ENCODE measurements at regions of chr19 and their contacts with region 1.

Region 1: GRCh38 chr19:40348125-40348913 is at the starts of genes C19orf47 and PLD3:
- DNase-seq: peak; percentile 100
- ATAC-seq: peak; percentile 95 to 97
- H3K4me3 ChIP-seq: peak within 1 kb of the TSS; percentile 61 to 87 (median 82)
- H3K27ac ChIP-seq: peak within 1 kb of the TSS; percentile 86 to 93 (median 92)
- H3K4me1 ChIP-seq: peaks cover 9 to 22% of the 10 kb centered on the region in 2 donors
- H3K27me3 ChIP-seq: no peaks in the 10 kb centered on the region
- CTCF ChIP-seq: peak in 2 of 5 experiments; percentile 72 to 78
- POLR2A ChIP-seq: peak; percentile 87 to 95
- total RNA-seq, gene C19orf47: 178 to 287 (median 219) TPM
- total RNA-seq, gene PLD3: 136 to 198 (median 190) TPM

Region 2: GRCh38 chr19:40285353-40286234 is 62.7 kb before region 1 on chr19:
- in situ Hi-C with region 1: no loop called
- intact Hi-C with region 1: loop called (anchors 5 kb)
- DNase-seq: peak; percentile 99 to 100
- ATAC-seq: peak; percentile 88 to 90
- H3K4me3 ChIP-seq: peak overlapping the region; percentile 69 to 94 (median 77)
- H3K27ac ChIP-seq: peak overlapping the region; percentile 89 to 99 (median 95)
- H3K4me1 ChIP-seq: peaks cover 44 to 48% of the 10 kb centered on the region in 2 donors
- H3K27me3 ChIP-seq: no peaks in the 10 kb centered on the region
- CTCF ChIP-seq: no peak
- POLR2A ChIP-seq: peak in 1 of 2 donors; percentile 48

Region 3: DNA sequence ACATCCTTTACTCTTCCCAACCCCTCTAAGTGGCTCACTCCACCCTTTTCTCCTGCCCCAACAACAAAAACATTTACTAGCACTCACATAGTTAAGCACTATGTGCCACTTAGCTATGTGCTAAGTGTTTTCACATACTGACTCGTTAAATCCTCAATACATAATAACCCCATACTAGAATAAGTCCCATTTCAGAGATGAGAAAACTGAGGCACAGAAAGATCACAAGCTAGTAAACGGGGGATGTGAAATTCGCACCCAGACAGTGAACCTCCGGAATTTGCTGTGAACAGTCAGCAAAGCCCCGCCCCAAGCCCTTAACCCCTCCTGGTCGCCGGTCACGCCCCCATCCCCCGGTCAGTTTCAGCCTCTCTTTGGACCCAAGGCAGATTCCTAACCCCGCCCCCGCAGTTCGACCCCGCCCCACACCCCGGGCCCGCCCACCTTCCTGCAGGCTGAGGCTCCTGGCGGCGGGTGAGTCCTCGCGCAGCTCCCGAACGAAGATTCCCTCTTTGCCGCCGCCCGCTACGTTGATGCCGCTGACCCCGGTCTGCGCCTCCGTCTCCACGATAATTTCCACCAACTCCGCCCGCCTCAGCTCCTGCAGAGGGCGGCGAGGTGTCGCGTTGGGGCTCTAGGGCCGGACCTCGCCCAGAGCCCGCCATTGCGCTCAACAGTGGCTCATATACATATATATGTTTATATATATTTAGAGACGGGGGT is 55.1 kb after region 1 on chr19:
- in situ Hi-C with region 1: no loop called
- intact Hi-C with region 1: loop called (anchors 2 kb)
- DNase-seq: peak; percentile 70 to 77
- ATAC-seq: peak; percentile 57 to 76
- H3K4me3 ChIP-seq: peak overlapping the region; percentile 69 to 82 (median 71)
- H3K27ac ChIP-seq: peak overlapping the region; percentile 87 to 92 (median 88)
- H3K4me1 ChIP-seq: peaks cover 8 to 11% of the 10 kb centered on the region in 2 donors
- H3K27me3 ChIP-seq: no peaks in the 10 kb centered on the region
- CTCF ChIP-seq: peak in 1 of 5 experiments; percentile 33
- POLR2A ChIP-seq: no peak

Region 4: DNA sequence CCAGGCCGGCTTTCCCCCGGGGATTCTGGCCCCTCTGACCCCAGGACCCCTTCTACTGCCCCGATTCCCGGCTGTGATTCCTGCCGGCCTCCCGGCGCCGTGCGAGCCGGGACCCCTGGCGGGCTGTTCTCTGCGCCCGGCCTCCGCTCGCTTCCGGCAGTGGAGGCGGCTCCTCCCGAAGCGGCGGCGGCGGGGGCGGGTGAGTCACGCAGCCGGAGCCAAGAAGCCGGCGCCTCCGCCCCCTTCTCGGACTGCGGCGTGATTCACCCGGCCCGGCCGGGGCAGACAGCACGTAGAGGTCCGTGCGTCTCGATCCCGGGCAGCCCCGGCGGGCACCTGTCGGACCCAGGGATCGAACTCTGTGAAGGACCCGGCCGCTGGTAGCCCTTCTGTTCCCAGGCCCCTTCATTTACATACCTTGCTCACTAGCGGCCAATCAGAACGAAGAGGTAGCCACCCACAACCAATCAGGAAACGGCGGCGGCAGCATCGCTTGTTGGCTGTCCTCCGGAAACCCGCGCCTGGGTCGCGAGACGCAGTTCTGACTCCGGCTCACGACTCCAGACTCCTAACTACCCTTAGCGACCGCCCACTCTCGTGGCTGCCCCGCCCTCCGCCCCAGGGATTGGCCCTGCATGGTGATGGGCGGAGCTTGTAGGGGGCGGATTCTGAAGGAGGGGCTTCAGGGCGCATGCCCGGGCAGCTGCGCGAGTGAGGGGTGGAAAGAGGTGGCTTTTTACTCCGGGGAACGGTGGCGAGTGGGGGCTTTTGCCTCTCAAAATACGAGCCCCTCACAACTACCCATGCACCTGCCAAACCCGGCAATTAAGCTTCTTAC is 77.3 kb after region 1 on chr19 and contains the start of gene SERTAD1:
- in situ Hi-C with region 1: no loop called
- intact Hi-C with region 1: loop called (anchors 5 kb)
- DNase-seq: peak; percentile 99 to 100
- ATAC-seq: peak; percentile 82 to 87
- H3K4me3 ChIP-seq: peak within 1 kb of the TSS; percentile 78 to 94 (median 84)
- H3K27ac ChIP-seq: peak within 1 kb of the TSS; percentile 98 to 100 (median 99)
- H3K4me1 ChIP-seq: peaks cover 32 to 34% of the 10 kb centered on the region in 2 donors
- H3K27me3 ChIP-seq: no peaks in the 10 kb centered on the region
- CTCF ChIP-seq: peak in 4 of 5 experiments; percentile 66 to 97 (median 90)
- POLR2A ChIP-seq: peak; percentile 100
- total RNA-seq, gene SERTAD1: 15.3 to 18.3 (median 16.0) TPM

Region 5: DNA sequence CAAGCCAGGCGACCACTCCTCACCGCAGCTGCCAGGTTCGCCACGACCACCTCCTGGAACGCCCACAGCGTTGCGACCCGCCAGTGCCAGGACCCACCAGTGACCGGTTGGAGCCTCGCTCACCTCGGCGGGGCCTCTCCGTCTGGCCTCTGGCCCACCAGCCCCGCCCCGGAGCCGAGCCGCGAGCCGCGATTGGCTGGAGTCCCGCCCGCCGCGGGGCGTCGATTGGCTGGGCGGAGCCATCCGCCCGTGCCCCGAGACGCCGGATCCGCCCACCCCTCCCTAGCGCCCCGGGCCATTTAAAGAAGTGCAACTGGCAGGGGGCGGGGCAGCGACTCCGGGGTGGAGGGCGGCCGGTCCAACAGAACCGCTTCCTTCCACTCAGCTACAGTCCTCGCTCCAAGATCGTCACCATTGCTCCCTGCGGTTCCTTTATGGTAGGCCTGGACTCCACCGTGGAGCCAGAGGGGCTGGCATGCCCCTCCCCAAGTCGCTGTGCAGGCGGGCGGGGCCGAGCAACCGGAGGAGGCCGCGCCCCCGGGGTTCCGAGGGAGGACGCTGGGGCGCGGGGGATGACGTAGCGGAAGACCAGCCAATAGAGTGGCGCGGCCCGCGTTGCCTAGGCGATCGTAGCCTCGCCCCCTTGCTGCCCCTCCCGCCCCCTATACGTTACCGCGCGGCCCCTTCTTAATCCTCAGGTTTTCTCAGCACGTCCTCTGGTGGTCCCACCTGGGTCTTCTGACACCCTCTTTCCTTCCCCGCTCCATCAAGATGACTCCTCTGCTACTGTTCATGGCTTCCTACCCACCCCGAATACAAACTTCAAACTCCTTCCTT is 96.1 kb after region 1 on chr19 and contains the start of gene SERTAD3:
- in situ Hi-C with region 1: no loop called
- intact Hi-C with region 1: loop called (anchors 2 kb)
- DNase-seq: peak; percentile 95 to 97
- ATAC-seq: peak; percentile 72 to 73
- H3K4me3 ChIP-seq: peak within 1 kb of the TSS; percentile 77 to 98 (median 92)
- H3K27ac ChIP-seq: peak within 1 kb of the TSS; percentile 96 to 99 (median 99)
- H3K4me1 ChIP-seq: peaks cover 15 to 24% of the 10 kb centered on the region in 2 donors
- H3K27me3 ChIP-seq: no peaks in the 10 kb centered on the region
- CTCF ChIP-seq: peak in 2 of 5 experiments; percentile 16 to 22
- POLR2A ChIP-seq: peak; percentile 99
- total RNA-seq, gene SERTAD3: 12.7 to 24.4 (median 18.1) TPM

Region 6: DNA sequence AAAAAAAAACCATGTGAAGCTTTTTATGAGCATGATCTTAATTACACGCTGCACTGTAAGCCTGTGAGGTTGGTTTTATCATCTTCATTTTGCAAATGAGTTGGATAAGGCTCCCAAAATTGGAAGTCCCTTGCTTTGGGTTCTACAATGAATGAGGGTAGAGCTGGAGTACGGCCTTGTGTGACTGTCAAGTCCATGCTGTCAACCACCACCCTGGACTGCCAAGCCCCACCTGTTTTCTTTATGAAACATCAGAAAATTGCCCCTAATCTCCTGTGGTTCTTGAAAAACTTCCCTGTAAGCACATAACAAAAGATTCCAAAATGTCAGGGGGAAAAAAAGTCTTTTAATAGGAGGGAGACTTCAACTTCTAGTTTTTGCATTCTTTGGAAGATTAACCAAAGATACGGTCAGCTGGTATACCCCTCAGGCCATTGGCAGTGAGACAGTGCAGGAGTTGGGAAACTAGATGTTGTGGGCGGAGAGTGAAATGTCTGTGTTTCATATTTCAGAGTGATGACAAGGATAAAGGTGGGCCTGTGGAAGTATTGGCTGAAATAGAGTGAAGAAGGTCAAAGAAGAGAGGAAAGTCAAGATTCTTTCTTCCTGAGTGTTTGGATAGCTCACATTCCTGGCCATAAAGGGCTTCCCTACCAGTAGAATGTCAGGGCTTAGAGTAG is 683.5 kb after region 1 on chr19:
- in situ Hi-C with region 1: no loop called
- intact Hi-C with region 1: no loop called
- DNase-seq: no peak
- ATAC-seq: no peak
- H3K4me3 ChIP-seq: no peak overlapping the region
- H3K27ac ChIP-seq: no peak overlapping the region
- H3K4me1 ChIP-seq: no peaks in the 10 kb centered on the region
- H3K27me3 ChIP-seq: no peaks in the 10 kb centered on the region
- CTCF ChIP-seq: no peak
- POLR2A ChIP-seq: no peak